ENCODE measurements at regions of chr9 and their contacts with region 1.

Region 1: DNA sequence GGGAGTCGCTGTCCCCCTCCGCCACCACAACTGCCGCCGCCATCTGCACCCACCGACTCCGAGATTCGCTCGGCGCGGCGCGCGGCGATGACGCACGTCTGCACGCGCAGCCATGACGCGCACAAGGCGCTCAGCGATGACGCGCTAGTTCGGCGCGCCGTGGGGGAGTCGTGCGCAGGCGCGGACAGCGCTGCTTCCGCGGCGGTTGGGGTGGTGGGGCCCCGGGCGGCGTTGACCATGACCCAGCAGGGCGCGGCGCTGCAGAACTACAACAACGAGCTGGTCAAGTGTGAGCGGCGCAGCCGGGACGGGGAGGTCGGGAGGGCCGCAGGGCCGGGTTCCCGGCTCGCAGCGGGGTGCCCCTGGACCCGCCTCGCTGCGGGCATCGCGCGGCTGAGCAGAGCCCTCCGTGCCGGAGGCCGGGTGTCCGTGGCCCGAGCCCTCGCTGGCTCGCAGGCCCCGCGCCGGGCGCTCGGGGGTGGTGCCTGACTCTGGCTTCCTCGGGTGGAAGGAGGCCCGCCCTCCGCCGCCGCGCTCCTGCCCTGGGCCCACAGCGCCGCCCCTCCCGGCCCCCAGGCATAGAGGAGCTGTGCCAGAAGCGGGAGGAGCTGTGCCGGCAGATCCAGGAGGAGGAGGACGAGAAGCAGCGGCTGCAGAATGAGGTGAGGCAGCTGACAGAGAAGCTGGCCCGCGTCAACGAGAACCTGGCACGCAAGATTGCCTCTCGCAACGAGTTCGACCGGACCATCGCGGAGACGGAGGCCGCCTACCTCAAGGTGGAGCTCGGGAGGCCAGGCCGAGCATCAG is at the starts of genes ANAPC2 and SSNA1:
- DNase-seq: peak; percentile 92 to 97 (median 94)
- H3K4me3 ChIP-seq: peak within 1 kb of the TSS; percentile 90 to 99 (median 96)
- H3K27ac ChIP-seq: peak within 1 kb of the TSS; percentile 70 to 90
- H3K4me1 ChIP-seq: peaks cover 3 to 39% (median 36%) of the 10 kb centered on the region in 4 experiments
- H3K27me3 ChIP-seq: no peaks in the 10 kb centered on the region

Region 2: DNA sequence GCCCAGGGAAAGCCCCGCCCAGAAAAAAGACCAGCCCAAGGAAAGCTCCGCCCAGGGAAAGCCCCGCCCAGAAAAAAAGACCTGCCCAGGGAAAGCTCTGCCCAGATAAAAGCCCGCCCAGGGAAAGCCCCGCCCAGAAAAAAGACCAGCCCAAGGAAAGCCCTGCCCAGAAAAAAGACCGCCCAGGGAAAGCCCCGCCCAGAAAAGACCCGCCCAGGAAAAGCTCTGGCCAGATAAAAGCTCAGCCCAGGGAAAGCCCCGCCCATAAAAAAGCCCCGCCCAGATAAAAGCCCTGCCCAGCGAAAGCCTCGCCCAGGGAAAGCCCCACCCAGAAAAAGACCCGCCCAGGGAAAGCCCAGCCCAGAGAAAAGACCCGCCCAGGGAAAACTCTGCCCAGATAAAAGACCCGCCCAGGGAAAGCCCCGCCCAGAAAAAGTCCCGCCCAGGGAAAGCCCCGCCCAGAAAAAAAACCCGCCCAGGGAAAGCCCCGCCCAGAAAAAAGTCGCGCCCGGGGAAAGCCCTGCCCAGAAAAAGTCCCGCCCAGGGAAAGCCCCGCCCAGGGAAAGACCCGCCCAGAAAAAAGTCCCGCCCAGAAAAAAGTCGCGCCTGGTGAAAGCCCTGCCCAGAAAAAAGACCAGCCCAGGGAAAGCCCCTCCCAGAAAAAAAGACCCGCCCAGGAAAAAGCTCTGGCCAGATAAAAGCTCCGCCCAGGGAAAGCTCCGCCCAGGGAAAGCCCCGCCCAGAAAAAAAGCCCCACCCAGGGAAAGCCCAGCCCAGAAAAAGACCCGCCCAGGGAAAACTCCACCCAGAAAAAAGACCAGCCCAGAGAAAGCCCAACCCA is 37.9 kb before region 1 on chr9:
- CTCF ChIA-PET with region 1: no interaction called
- POLR2A ChIA-PET with region 1: no interaction called
- DNase-seq: peak in 2 of 3 donors; percentile 59 to 66
- H3K4me3 ChIP-seq: no peak overlapping the region
- H3K27ac ChIP-seq: no peak overlapping the region
- H3K4me1 ChIP-seq: no peaks in the 10 kb centered on the region
- H3K27me3 ChIP-seq: peaks cover 0 to 47% (median 6%) of the 10 kb centered on the region in 5 experiments

Region 3: DNA sequence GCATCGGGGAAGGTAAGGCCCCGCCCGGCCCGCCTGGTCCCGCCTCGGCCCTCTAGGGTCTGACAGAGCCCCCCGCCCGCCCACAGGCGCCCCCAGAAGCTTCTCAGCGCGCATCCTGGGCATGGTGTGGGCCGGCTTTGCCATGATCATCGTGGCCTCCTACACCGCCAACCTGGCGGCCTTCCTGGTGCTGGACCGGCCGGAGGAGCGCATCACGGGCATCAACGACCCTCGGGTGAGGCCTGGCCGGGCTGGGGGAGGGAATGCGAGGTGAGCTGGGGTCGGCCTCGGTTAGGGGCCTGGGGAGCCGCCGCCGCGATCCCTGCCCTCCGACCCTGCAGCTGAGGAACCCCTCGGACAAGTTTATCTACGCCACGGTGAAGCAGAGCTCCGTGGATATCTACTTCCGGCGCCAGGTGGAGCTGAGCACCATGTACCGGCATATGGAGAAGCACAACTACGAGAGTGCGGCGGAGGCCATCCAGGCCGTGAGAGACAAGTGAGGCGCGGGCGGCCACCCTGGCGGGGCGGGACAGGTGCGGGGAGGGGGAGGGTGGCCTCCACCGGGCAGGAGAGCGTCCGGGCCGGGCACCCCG is 26.1 kb before region 1 on chr9:
- CTCF ChIA-PET with region 1: no interaction called
- POLR2A ChIA-PET with region 1: no interaction called
- DNase-seq: peak in 1 of 3 donors; percentile 45
- H3K4me3 ChIP-seq: peak overlapping the region in 2 of 7 experiments; percentile 49 to 59
- H3K27ac ChIP-seq: no peak overlapping the region
- H3K4me1 ChIP-seq: peaks cover 0 to 49% (median 27%) of the 10 kb centered on the region in 4 experiments
- H3K27me3 ChIP-seq: peaks cover 0 to 98% (median 24%) of the 10 kb centered on the region in 5 experiments

Region 4: DNA sequence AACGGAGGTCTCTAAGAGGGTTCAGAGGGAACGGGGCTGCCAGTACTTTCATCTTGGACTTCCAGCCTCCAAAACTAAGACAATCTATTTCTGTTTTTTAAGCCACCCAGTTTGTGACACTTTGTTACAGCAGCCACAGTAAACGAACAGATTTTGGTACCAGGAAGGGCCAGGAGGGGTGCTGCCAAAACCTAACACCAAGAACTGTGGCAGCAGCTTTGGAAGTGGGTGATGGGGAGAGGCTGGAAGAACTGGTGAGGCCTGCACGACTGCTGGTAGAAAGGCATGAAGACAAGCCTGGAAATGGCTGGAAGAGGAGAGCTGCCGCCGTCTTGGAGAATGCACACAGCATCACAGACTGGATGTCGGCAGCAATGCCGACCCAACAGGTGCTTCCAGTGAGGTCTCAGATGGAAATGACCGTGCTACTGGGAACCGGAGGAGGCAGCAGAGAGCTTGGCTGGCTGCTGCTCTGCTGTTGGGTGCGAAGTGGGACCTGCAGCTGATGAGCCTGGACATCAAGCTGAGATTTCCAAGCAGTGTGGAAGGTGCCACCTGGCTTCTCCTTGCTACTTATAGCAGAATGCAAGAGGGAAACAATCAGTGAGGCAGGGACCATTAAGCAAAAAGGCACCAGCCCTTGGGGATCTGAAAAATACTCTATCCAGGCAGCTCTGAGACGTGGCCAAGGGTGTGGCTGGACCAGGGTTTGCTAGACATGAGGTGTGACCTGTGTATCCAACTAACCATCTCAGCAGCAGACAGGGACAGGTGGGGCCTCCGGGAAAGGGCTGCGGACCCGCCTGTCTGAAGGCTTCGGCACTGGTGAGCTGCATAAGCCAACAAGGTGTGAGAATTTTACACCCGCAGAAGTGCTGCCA is 12.2 kb before region 1 on chr9:
- CTCF ChIA-PET with region 1: interaction called, 33 read pairs
- POLR2A ChIA-PET with region 1: interaction called, 3 read pairs
- DNase-seq: peak in 2 of 3 donors; percentile 49 to 55
- H3K4me3 ChIP-seq: no peak overlapping the region
- H3K27ac ChIP-seq: no peak overlapping the region
- H3K4me1 ChIP-seq: peaks cover 0 to 32% (median 21%) of the 10 kb centered on the region in 4 experiments
- H3K27me3 ChIP-seq: peaks cover 0 to 4% (median 0%) of the 10 kb centered on the region in 5 experiments

Region 5: GRCh38 chr9:137200311-137201204 is 11.9 kb after region 1 on chr9 and contains the start of gene TPRN:
- CTCF ChIA-PET with region 1: interaction called, 14 read pairs
- POLR2A ChIA-PET with region 1: interaction called, 6 read pairs
- DNase-seq: peak; percentile 98 to 99 (median 99)
- H3K4me3 ChIP-seq: peak within 1 kb of the TSS; percentile 69 to 92 (median 89)
- H3K27ac ChIP-seq: peak within 1 kb of the TSS in 1 of 2 experiments; percentile 71
- H3K4me1 ChIP-seq: peaks cover 4 to 54% (median 33%) of the 10 kb centered on the region in 4 experiments
- H3K27me3 ChIP-seq: peaks cover 0 to 9% (median 0%) of the 10 kb centered on the region in 5 experiments